Activated naive CD4-positive, alpha-beta T cell treated with anti-CD3 and anti-CD28 coated beads for 36 hours (primary cell): ENCODE measurements at regions of chr9 and their contacts with region 1.

Region 1: DNA sequence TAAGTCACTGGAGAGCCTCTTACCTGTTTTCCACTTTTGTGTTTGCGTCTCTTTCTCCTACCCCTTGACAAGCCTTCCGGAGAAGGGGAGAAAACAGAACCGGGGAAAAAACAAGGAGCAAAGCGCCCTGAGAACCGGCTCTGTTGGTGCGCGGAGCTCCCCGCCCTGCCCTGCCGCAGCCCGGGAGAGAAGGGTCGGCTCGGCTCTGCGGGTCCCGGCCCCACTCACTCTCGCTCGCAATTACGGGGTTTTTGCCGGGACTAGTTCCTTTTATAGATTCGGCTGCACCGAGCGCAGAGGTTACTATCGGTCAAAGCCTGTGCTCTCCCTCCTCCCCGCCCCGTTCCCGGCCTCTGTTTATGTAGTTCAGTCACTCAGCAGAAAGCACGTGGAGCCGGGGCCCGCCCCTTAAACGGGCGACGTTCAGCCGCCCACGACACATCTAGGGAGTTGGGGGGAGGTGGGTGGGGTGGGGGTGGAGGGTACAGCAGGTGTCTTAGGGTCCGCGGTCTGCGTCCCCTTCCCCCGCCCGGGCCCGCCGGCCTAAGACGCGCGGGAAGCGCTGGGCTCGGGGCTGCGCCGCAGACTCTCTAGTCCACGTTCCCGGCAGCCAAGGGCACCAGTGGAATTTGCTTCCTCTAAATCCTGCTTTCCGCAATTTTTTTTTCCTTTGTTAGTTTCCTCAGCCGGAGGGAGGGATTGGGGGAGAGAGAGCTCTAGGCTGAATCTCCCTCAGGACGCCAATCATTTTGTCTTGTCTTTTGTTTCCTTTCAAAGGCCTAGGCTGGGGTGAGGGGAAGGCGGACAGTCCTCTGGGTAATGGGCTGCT is at the start of gene ABCA1:
- DNase-seq: peak; percentile 94
- H3K4me3 Mint-ChIP-seq: peak within 1 kb of the TSS; percentile 86
- H3K27ac Mint-ChIP-seq: peak within 1 kb of the TSS; percentile 80
- H3K4me1 Mint-ChIP-seq: peaks cover 21% of the 10 kb centered on the region
- H3K27me3 Mint-ChIP-seq: peaks cover 2% of the 10 kb centered on the region
- total RNA-seq, gene ABCA1: 31.3 to 31.5 TPM

Region 2: GRCh38 chr9:104879555-104880309 is 48.4 kb before region 1 on chr9:
- CTCF ChIA-PET with region 1: no interaction called
- intact Hi-C with region 1: no loop called
- DNase-seq: no peak
- H3K4me3 Mint-ChIP-seq: no peak overlapping the region
- H3K27ac Mint-ChIP-seq: no peak overlapping the region
- H3K4me1 Mint-ChIP-seq: no peaks in the 10 kb centered on the region
- H3K27me3 Mint-ChIP-seq: no peaks in the 10 kb centered on the region

Region 3: GRCh38 chr9:104948277-104948676 is 20.2 kb after region 1 on chr9:
- CTCF ChIA-PET with region 1: interaction called, 4 read pairs
- intact Hi-C with region 1: loop called (anchors 1 kb)
- DNase-seq: no peak
- H3K4me3 Mint-ChIP-seq: no peak overlapping the region
- H3K27ac Mint-ChIP-seq: no peak overlapping the region
- H3K4me1 Mint-ChIP-seq: peaks cover 10% of the 10 kb centered on the region
- H3K27me3 Mint-ChIP-seq: no peaks in the 10 kb centered on the region

Region 4: DNA sequence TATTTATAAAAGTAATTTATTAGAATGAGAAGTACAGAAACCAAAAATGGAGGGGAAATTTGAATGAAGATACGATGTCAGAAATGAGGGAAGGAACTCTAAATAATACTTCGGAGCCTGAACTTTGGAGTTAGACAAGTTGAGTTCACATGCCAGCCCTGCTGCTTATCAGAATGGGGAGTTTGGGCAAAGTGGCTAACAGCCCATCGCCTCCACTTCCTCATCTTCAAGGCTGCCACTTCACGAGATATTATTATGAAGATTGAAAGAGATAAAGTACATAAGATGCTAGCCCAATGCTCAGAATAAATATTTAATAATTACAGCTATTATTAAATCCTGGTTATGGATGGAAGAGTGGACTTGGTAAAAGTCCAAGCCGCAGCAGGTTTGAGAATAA is 56.0 kb after region 1 on chr9:
- CTCF ChIA-PET with region 1: interaction called, 16 read pairs
- intact Hi-C with region 1: loop called (anchors 1 kb)
- DNase-seq: no peak
- H3K4me3 Mint-ChIP-seq: no peak overlapping the region
- H3K27ac Mint-ChIP-seq: peak overlapping the region; percentile 94
- H3K4me1 Mint-ChIP-seq: peaks cover 70% of the 10 kb centered on the region
- H3K27me3 Mint-ChIP-seq: peaks cover 8% of the 10 kb centered on the region

Region 5: GRCh38 chr9:105053209-105053652 is 125.1 kb after region 1 on chr9:
- CTCF ChIA-PET with region 1: interaction called, 4 read pairs
- intact Hi-C with region 1: loop called (anchors 1 kb)
- DNase-seq: peak; percentile 89
- H3K4me3 Mint-ChIP-seq: no peak overlapping the region
- H3K27ac Mint-ChIP-seq: peak overlapping the region; percentile 88
- H3K4me1 Mint-ChIP-seq: peaks cover 42% of the 10 kb centered on the region
- H3K27me3 Mint-ChIP-seq: no peaks in the 10 kb centered on the region

Region 6: DNA sequence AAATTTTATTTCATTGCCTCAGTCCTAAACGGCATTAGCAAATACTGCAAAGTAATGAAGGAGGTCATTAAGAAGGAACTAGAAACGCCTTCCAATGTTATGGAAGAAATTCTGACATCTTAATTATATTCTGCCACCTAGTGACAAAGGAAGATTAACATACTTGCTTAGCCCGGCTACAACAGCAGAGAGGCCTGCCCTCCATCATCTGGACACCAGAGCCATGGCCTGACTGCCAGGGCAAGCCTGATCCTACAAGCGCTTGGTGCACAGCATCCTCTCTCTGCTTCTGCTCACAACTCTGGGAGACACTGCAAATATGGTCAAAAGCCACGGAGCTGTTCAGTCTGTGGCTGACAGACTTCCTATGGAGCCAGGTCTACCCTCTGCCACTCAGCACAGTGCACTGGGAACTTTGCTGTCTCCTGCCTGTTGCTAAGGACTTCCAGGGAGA is 229.0 kb after region 1 on chr9:
- CTCF ChIA-PET with region 1: interaction called, 27 read pairs
- intact Hi-C with region 1: loop called (anchors 1 kb)
- DNase-seq: peak; percentile 46
- H3K4me3 Mint-ChIP-seq: no peak overlapping the region
- H3K27ac Mint-ChIP-seq: no peak overlapping the region
- H3K4me1 Mint-ChIP-seq: peaks cover 16% of the 10 kb centered on the region
- H3K27me3 Mint-ChIP-seq: no peaks in the 10 kb centered on the region

Region 7: DNA sequence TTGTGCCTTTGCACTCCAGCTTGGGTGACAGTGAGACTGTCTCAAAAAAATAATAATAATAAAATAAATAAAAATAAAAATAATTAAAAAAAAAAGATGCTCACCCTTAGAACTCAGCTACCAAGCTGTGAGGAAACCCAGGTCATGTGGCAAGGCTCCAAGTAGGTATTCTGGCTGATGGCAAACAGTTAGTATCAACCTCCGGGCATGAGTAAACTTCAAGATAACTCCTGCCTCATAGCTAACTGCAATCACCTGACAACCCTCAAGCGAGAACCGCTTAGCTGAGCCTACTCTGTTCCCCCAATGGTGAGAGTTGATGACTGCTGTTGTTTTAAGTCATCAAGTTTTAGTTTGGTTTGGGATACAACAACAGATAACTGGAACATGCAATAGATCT is 310.2 kb after region 1 on chr9:
- CTCF ChIA-PET with region 1: no interaction called
- intact Hi-C with region 1: no loop called
- DNase-seq: no peak
- H3K4me3 Mint-ChIP-seq: no peak overlapping the region
- H3K27ac Mint-ChIP-seq: no peak overlapping the region
- H3K4me1 Mint-ChIP-seq: peaks cover 6% of the 10 kb centered on the region
- H3K27me3 Mint-ChIP-seq: peaks cover 14% of the 10 kb centered on the region

Region 8: DNA sequence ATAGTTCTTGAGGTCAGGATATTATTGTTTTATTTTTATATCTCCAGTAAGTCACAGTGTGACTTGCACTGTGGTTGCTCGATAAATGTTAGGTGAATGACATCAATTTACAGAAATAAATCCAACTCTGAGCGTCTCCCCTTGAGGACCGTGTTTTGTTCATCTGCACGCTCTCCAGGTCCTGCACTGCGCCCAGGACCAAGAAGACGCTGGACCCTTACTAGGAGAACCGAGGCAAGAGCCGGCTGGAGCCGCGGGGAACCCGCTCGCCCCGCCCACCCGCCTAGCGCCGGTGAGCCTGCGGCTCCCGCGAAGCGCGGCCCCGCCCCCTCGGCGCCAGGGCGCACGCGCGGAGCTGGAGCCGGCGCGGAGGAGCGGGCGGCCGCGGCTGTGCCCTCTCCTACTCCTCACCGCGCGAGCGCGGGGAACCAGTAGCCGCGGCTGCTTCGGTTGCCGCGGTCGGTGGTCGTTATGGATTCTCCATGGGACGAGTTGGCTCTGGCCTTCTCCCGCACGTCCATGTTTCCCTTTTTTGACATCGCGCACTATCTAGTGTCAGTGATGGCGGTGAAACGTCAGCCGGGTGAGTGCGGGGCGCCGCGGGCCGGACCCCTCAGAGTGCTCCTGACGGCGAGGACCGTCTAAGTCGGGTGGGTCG is 766.2 kb after region 1 on chr9 and contains the start of gene TMEM38B:
- CTCF ChIA-PET with region 1: no interaction called
- intact Hi-C with region 1: loop called (anchors 10 kb)
- DNase-seq: peak; percentile 76
- H3K4me3 Mint-ChIP-seq: peak within 1 kb of the TSS; percentile 90
- H3K27ac Mint-ChIP-seq: peak within 1 kb of the TSS; percentile 75
- H3K4me1 Mint-ChIP-seq: peaks cover 33% of the 10 kb centered on the region
- H3K27me3 Mint-ChIP-seq: peaks cover 10% of the 10 kb centered on the region
- total RNA-seq, gene TMEM38B: 17.6 TPM